BJ (cell line): ENCODE measurements at regions of chr17 and their contacts with region 1.

Region 1: DNA sequence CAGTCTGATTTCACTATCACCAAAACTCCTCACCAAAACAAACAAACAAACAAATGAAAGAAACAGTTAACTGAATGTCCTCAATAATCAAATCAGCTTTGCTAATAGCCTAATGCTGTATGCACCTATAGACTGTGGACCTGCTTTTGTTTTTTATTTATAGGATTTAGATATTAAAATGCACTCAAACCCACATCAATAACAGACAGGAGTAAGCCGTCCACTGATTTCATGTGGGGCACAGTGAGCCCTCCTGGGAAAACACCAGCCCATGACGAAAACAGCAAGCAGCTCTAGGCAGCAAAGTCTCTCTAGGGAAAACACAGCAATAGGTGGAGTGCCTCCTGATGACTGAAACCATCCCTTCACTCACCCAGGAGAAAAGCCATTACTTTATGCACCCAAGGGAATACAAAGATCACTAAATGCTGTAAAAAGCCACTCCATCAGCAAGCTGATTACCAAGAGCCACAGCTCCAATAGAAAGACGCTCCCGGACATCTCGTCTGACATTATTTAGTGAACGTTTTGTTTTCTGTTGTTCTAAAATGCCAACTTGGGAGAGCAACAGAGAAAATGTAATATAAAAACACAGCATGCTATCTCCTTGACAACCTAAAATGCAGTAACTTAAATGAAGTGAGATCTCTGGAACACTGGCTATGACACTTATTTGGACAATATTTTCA is 47.8 kb downstream of the ANKFY1 start:
- DNase-seq: no peak
- H3K4me3 ChIP-seq: no peak overlapping the region
- H3K27me3 ChIP-seq: no peaks in the 10 kb centered on the region
- CTCF ChIP-seq: no peak

Region 2: GRCh38 chr17:4187076-4187475 is 28.9 kb before region 1 on chr17:
- CTCF ChIA-PET with region 1: no interaction called
- POLR2A ChIA-PET with region 1: no interaction called
- DNase-seq: no peak
- H3K4me3 ChIP-seq: no peak overlapping the region
- H3K27me3 ChIP-seq: no peaks in the 10 kb centered on the region
- CTCF ChIP-seq: no peak

Region 3: GRCh38 chr17:4199818-4200402 is 16.1 kb before region 1 on chr17:
- CTCF ChIA-PET with region 1: interaction called, 11 read pairs
- POLR2A ChIA-PET with region 1: interaction called, 3 read pairs
- DNase-seq: no peak
- H3K4me3 ChIP-seq: no peak overlapping the region
- H3K27me3 ChIP-seq: no peaks in the 10 kb centered on the region
- CTCF ChIP-seq: peak; percentile 75

Region 4: DNA sequence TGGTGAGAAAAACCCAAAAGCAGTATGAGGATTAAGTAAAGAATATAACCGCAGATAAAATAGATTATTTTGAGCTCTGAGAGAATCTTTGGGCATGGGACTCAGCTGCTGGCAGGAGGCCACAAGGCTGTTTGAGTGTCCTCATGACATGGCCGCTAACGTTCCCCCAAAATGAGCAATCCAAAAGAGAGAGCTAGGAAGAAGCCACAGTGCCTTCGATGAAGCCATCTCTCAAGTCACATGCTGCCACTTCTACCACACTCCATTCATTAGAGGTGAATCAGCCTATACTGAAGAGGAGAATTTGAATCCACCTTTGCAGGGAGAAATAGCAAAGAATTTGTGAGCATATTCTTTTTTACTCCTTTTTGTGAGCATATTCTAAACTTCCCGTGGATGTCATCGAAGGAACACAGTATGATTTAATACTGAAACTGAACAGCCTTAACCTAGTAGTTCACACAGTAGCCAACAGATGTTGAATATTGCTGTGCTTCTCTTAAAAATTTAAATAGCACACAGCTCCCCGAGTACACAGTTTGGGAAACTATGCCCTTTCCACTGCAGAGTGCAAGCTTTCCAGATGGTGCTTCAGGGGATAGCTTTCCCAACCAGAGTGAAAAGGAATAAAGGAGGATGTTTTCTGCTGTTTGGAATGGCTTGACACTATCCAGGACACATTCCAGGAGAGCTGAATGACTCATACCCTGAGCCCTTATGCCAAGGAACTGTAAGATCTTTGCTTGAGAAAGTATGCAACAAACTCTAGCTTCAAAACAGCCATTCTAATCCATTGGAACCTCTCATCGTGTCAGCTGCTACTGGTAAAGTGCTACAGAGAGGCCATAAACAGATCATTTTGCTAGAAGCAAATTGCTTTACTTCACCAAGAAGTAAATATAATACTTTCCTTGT is 13.9 kb after region 1 on chr17:
- CTCF ChIA-PET with region 1: interaction called, 14 read pairs
- POLR2A ChIA-PET with region 1: no interaction called
- DNase-seq: peak; percentile 99
- H3K4me3 ChIP-seq: no peak overlapping the region
- H3K27me3 ChIP-seq: no peaks in the 10 kb centered on the region
- CTCF ChIP-seq: no peak

Region 5: DNA sequence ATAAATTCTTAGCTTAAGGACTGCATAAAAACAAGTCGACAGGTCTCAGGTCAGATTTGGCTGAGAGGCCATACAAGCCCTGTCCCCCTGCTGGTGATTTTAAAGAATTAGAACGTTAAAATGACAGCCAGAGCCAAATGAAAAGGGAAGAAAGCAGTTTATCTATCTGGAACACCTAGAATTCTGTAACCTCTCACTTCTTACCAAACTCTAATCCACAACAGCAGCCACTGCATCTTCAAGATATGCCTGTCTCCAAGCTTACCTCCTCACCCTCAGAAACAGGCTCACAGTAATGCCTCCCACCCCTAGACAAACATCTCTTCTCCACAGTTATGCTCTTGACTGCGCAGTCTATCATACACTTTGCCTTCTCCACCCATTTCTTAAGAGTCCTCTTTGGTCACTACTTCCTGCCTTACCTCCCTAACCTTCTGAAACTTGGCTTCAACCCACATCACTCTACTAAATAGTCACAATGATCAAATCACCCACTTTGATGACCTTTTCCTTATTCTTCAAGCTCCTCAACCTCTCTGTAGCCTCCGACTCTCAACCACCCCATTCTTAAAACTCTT is 33.5 kb after region 1 on chr17:
- CTCF ChIA-PET with region 1: interaction called, 27 read pairs
- POLR2A ChIA-PET with region 1: no interaction called
- DNase-seq: no peak
- H3K4me3 ChIP-seq: no peak overlapping the region
- H3K27me3 ChIP-seq: no peaks in the 10 kb centered on the region
- CTCF ChIP-seq: peak; percentile 59

Region 6: DNA sequence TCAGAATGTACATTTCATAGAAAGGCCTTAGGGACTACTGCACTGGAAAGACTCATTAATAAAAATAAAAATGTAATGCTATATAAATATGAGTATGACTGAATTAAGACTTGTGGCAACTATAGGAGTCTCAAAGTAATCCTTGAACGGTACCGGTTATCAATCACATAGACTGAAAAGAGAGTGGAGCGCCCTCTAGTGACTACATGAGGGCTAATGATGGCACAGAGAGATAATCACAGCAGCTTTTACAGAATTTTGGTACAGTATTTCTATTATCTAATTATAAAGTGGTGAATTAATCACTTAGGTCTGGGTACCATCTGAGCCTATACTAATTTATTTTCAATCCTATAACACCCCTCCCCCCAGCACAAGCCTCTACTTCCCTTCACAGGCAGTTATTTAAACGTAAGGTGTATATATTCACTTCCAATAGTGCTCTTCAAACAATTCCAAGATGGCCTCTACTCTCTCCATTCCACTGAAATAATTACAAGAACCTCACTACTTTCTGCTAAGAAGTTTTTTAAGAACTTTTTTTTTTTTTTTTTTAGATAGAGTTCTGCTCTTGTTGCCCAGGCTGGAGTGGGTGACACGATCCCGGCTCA is 88.5 kb after region 1 on chr17:
- CTCF ChIA-PET with region 1: interaction called, 14 read pairs
- POLR2A ChIA-PET with region 1: no interaction called
- DNase-seq: no peak
- H3K4me3 ChIP-seq: no peak overlapping the region
- H3K27me3 ChIP-seq: no peaks in the 10 kb centered on the region
- CTCF ChIP-seq: peak; percentile 80

Region 7: GRCh38 chr17:4407851-4408250 is 191.8 kb after region 1 on chr17:
- CTCF ChIA-PET with region 1: interaction called, 103 read pairs
- POLR2A ChIA-PET with region 1: no interaction called
- DNase-seq: no peak
- H3K4me3 ChIP-seq: no peak overlapping the region
- H3K27me3 ChIP-seq: no peaks in the 10 kb centered on the region
- CTCF ChIP-seq: no peak

Region 8: DNA sequence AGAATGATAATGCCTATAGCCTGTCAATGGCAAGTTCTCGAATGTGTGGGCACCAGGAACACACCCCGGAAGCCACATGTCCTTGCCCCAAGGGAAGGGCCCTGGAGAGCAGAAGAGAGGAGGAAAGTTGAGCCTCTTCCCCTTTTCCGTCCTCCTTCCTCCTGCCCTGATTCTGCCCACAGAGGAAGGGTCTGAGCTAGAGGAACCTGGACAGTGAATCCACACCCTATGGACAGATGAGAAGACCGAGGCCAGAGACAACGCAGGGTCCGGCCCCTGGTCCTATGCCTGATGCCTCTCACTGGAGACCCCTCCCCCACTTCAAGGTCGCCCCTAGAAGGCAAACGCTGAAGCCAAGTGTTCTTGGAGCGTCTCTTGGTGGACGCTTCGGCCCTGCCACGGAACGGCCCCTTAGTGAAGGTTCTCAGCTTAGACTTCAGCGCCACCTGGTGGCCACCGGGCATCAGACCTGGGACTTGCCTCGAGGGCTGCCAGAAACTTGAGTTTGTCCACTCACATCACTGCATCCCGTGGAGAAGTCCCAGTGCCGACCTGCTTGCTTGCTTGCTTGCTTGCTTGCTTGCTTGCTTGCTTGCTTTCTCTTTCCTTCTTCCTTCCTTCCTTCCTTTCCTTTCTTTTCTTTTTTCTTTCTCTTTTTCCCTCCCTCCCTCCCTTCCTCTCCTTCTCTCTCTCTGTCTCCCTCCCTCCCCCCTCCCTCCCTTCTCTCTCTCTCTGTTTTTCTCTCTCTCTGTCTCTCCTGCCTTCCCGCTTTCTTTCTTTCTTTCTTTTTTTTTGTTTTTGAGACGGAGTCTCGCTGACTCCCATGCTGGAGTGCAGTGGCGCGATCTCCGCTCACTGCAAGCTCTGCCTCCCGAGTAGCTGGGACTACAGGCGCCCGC is 197.2 kb after region 1 on chr17:
- CTCF ChIA-PET with region 1: interaction called, 103 read pairs
- POLR2A ChIA-PET with region 1: no interaction called
- DNase-seq: no peak
- H3K4me3 ChIP-seq: no peak overlapping the region
- H3K27me3 ChIP-seq: no peaks in the 10 kb centered on the region
- CTCF ChIP-seq: peak; percentile 89